ENCODE measurements at regions of chr2 and their contacts with region 1.

Region 1: DNA sequence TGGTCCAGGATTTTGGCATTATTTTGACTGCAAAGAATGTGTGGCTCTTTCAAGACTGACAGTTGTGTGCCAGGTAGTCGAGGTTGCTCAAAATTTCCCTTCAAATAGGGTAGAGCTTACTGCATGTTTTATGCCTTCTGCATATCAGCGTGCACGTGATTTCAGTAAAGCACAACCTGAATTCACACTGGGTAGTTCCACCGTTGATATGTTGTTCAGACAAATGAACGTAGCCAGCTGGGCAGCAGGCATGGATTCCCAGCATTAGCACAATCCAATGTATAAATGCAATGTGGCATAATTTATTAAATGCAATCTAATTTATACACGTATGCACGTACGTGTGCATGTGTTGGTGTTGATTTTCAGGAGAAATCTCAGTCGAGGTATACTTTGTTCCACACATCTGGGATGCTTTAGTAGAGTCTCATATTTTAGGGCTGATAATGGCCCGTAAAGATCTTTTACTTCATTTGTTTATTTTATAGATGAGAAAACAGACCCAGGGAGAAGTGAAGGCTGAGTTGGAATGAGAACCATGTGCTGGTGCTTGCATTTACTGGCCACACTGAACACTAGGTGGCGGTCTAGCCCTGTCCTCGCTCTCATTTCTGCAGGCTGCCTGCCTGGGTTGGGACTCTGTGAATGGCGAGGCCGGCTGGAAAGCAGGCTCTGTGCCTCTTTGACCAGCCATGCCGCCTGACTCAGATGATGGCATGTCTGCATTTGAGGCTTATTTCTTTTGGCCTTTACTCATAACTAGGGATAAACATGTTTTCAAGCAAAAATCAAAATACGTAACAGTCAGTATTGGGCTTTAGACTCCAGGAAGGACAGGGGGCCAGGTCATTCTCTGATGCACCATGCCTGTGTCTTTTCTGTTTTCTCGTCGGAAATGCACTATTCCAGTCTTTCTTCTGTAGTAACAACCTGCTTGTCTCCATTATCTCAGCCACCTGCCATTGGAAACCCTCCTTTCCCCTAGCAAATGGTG is 120.4 kb downstream of the RNF144A start:
- DNase-seq: peak; percentile 41
- ATAC-seq: peak; percentile 93
- H3K4me3 ChIP-seq: no peak overlapping the region
- H3K27ac ChIP-seq: no peak overlapping the region
- H3K4me1 ChIP-seq: no peaks in the 10 kb centered on the region
- H3K27me3 ChIP-seq: no peaks in the 10 kb centered on the region
- CTCF ChIP-seq: peak; percentile 87
- EP300 ChIP-seq: no peak
- POLR2A ChIP-seq: no peak
- RAD21 ChIP-seq: peak; percentile 64

Region 2: GRCh38 chr2:6865346-6866274 is 172.0 kb before region 1 on chr2 and contains the start of gene CMPK2:
- CTCF ChIA-PET with region 1: no interaction called
- POLR2A ChIA-PET with region 1: no interaction called
- in situ Hi-C with region 1: no loop called
- intact Hi-C with region 1: no loop called
- DNase-seq: peak; percentile 35
- ATAC-seq: peak; percentile 86
- H3K4me3 ChIP-seq: peak within 1 kb of the TSS; percentile 65 to 75 (median 70)
- H3K27ac ChIP-seq: no peak within 1 kb of the TSS
- H3K4me1 ChIP-seq: peaks cover 19% of the 10 kb centered on the region
- H3K27me3 ChIP-seq: peaks cover 0 to 35% of the 10 kb centered on the region in 2 experiments; a peak in 3 of 5 replicates
- CTCF ChIP-seq: peak; percentile 21; the same call in 1 of the 2 replicates
- EP300 ChIP-seq: no peak
- POLR2A ChIP-seq: no peak
- RAD21 ChIP-seq: no peak; the same call in 1 of the 2 replicates
- total RNA-seq, gene CMPK2: 0.58 and 1.0 TPM in 2 replicates

Region 3: DNA sequence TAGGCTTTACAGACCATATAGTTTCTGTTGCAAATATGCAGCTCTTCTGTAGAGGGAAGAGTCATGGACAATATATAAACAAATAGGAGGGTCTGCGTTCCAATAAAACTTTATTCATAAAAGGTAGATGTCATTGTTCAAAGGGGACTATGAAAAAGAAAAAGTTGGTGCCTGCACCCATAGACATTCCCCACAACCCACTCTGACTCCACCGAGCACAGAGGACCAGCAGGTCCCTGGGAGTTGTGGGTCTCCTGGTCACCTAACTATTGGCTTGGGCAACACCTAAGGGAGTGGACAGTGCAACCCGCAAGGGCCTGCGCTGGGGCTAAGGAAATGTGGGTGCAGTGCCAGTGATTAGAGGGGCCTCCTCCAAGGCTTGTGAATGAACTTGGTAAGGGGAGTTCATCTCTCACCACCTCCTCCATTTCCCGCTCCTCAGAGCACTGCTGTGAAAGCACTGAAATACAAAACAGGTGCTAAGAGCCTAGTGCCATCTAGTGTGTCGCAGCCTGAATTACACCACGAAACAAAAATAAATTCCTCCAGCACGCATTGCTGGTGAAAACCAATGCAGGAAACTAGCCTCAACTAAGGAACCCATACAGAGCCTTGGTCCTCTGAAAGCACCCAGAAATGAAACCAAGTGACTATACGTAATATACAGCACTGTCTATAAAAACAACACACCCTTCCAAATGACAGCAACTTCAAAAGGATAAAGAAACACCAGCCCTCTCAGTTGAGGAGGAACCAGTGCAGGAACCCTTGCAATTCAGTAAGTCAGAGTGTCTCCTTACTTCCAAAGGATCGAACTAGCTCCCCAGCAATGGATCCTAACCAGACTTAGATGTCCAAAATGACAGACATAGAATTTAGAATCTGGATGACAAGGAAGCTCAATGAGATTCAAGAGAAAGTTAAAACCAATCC is 46.2 kb after region 1 on chr2:
- CTCF ChIA-PET with region 1: interaction called, 11 read pairs
- POLR2A ChIA-PET with region 1: no interaction called
- in situ Hi-C with region 1: no loop called
- intact Hi-C with region 1: loop called (anchors 1 kb)
- DNase-seq: peak; percentile 45
- ATAC-seq: peak; percentile 98
- H3K4me3 ChIP-seq: no peak overlapping the region
- H3K27ac ChIP-seq: no peak overlapping the region
- H3K4me1 ChIP-seq: 0 out of 2 replicates have a peak, but pooled peaks cover 5% of the 10 kb centered on the region
- H3K27me3 ChIP-seq: no peaks in the 10 kb centered on the region
- CTCF ChIP-seq: peak; percentile 91
- EP300 ChIP-seq: no peak
- POLR2A ChIP-seq: no peak
- RAD21 ChIP-seq: peak; percentile 73